Cardiac septum (tissue), 1 donor: ENCODE measurements at regions of chr2 and their contacts with region 1.

Region 1: GRCh38 chr2:15914596-15915385 is 25.6 kb upstream of the MYCN start:
- DNase-seq: peak; percentile 89

Region 2: DNA sequence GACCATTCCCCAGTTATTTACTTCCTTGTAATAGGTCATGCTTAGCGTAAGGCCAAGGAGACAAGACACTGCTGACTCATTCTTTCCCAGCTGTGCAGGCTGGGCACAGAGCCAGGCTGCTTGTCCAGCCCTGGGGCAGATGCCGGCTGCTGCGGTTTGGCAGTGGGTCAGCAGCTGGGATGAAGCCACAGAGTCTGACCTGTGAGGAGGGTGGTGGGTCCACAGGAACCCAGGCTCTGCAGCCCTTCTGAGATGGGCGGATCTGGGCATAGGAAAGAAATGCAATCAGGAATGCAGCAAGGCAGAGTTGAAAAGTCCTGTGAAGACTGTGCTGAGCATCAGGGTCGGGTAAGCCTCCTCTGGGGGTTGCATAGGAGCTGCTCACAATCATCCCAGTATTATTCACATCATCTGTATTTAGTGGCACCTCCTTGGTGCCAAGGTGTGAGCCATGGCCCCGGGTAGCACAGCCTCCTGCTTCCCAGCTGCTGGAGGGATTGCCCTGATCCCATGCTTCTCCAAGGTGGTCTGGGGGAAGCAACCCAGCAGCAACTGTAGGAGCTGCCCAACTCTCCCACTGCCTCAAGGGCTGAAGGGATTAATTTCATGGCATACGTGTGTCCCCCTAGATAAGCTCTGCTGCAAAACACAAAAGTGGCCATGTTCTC is 184.1 kb before region 1 on chr2:
- intact Hi-C with region 1: loop called (anchors 5 kb)
- DNase-seq: peak; percentile 95